ENCODE measurements at regions of chr5 and their contacts with region 1.

Region 1: DNA sequence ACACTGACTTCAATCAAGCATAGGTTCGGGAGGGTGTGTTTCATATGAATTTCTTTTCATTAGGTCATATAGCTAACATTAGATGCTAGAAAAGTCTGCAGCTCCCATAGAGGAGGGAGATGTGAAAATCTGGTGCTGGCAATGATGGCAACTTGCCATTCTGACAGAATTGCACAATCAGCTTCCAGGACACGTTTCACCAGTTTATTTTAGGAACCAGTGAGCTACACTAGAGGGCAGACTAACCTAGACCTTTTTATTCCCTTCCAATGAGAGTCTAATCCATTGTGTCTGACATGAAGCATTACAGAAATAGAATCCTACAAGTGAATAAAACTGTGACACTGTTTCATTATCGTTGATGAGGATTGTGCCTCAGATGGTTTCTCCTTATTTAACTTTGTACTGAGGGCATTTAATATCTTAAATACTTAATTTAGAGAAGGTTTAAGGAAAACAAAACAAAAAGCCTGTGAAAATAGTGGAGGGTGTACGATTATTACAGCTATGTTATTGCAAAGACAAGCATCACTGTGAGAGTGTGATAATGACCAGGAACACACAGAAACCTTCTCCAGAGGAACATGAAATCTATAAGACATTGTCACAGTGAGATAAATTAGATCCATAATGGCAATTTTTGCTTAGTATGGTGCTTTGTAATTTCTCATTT is 363.3 kb upstream of the RPS23 start:
- DNase-seq: peak; percentile 91
- H3K4me3 ChIP-seq: no peak overlapping the region
- H3K27ac ChIP-seq: no peak overlapping the region
- H3K4me1 ChIP-seq: peaks cover 22% of the 10 kb centered on the region
- H3K27me3 ChIP-seq: no peaks in the 10 kb centered on the region
- CTCF ChIP-seq: peak; percentile 77

Region 2: DNA sequence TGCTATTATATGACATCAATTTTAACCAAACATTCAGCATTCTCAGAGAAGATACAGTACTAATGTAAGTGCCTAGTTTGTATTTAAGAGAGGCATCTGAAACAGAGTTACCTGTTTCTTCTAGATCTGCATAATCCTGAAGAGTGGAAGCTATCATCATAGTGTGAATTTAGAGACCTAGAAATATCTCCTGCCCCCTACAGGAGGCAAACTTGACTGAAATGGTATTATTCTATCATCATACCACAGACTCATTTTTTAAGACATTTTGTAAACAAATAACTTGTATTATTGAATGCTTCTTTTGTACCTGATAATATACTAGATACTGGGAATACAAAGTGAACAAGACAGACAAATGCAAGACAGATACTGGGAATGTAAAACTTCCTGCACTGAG is 146.5 kb before region 1 on chr5:
- CTCF ChIA-PET with region 1: no interaction called
- POLR2A ChIA-PET with region 1: no interaction called
- intact Hi-C with region 1: no loop called
- DNase-seq: peak; percentile 4
- H3K4me3 ChIP-seq: no peak overlapping the region
- H3K27ac ChIP-seq: no peak overlapping the region
- H3K4me1 ChIP-seq: no peaks in the 10 kb centered on the region
- H3K27me3 ChIP-seq: no peaks in the 10 kb centered on the region
- CTCF ChIP-seq: peak; percentile 44

Region 3: GRCh38 chr5:82734347-82734746 is 92.9 kb after region 1 on chr5:
- CTCF ChIA-PET with region 1: no interaction called
- POLR2A ChIA-PET with region 1: no interaction called
- intact Hi-C with region 1: no loop called
- DNase-seq: no peak
- H3K4me3 ChIP-seq: no peak overlapping the region
- H3K27ac ChIP-seq: peak overlapping the region; percentile 54
- H3K4me1 ChIP-seq: peaks cover 28% of the 10 kb centered on the region
- H3K27me3 ChIP-seq: no peaks in the 10 kb centered on the region
- CTCF ChIP-seq: no peak

Region 4: DNA sequence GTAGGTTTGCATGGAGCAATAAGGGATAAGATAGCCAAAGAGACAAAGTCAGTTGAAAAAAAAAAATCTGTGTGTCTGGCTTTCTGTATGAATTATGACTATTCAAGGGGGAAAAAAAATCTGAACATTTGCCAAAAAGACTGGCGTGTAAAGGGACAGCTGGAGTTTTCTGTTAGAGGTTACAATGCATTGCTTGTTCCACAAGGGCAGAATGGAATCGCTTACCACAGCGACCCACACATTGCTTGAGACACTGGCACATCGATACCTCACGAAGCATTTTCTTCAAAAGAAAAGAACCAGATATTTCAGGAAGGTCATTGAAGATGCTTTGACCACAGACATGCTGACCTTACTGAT is 108.0 kb after region 1 on chr5:
- CTCF ChIA-PET with region 1: no interaction called
- POLR2A ChIA-PET with region 1: no interaction called
- intact Hi-C with region 1: loop called (anchors 1 kb)
- DNase-seq: peak; percentile 94
- H3K4me3 ChIP-seq: peak overlapping the region; percentile 18
- H3K27ac ChIP-seq: peak overlapping the region; percentile 64
- H3K4me1 ChIP-seq: peaks cover 41% of the 10 kb centered on the region
- H3K27me3 ChIP-seq: peaks cover 20% of the 10 kb centered on the region
- CTCF ChIP-seq: no peak

Region 5: DNA sequence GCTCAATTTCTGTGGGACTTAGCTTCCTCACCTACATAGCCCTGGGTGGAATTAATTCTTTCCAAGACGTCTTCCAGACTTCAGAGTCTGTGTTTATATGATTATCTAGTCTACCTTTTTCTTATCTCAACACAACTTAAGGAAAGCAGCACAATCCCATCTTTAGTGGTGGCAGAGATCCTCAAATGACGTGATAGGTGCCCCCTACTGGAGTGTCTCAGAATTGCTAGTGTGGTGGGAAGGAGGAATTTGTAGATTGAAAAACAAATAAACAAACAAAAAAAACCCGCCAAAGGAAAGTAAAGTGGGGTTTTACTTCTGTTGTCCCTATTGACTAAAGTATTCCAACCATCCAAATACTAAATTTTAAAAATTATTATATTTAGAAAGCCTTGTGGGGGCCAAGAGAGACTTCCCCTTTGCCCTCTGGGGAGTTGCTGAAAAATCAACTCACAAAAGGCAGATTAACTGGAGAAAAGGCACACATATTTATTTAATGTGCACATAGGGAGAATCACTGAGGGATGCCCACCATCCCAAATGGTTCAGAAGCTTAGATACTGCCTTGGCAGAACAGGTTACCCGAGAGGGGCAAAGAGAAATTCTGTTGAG is 152.4 kb after region 1 on chr5:
- CTCF ChIA-PET with region 1: no interaction called
- POLR2A ChIA-PET with region 1: no interaction called
- intact Hi-C with region 1: loop called (anchors 2 kb)
- DNase-seq: peak; percentile 63
- H3K4me3 ChIP-seq: no peak overlapping the region
- H3K27ac ChIP-seq: no peak overlapping the region
- H3K4me1 ChIP-seq: peaks cover 22% of the 10 kb centered on the region
- H3K27me3 ChIP-seq: no peaks in the 10 kb centered on the region
- CTCF ChIP-seq: peak; percentile 90

Region 6: GRCh38 chr5:83076742-83077661 is 435.5 kb after region 1 on chr5 and contains the starts of genes TMEM167A and XRCC4:
- CTCF ChIA-PET with region 1: no interaction called
- POLR2A ChIA-PET with region 1: no interaction called
- intact Hi-C with region 1: loop called (anchors 10 kb)
- DNase-seq: peak; percentile 99
- H3K4me3 ChIP-seq: peak within 1 kb of the TSS; percentile 84
- H3K27ac ChIP-seq: peak within 1 kb of the TSS; percentile 82
- H3K4me1 ChIP-seq: peaks cover 11% of the 10 kb centered on the region
- H3K27me3 ChIP-seq: no peaks in the 10 kb centered on the region
- CTCF ChIP-seq: no peak
- total RNA-seq, gene TMEM167A: 90.5 and 93.8 TPM in 2 replicates
- total RNA-seq, gene XRCC4: 8.1 and 10.1 TPM in 2 replicates

Region 7: GRCh38 chr5:83430130-83431010 is 788.9 kb after region 1 on chr5:
- CTCF ChIA-PET with region 1: no interaction called
- POLR2A ChIA-PET with region 1: no interaction called
- intact Hi-C with region 1: loop called (anchors 1 kb)
- DNase-seq: peak; percentile 69
- H3K4me3 ChIP-seq: no peak overlapping the region
- H3K27ac ChIP-seq: no peak overlapping the region
- H3K4me1 ChIP-seq: no peaks in the 10 kb centered on the region
- H3K27me3 ChIP-seq: no peaks in the 10 kb centered on the region
- CTCF ChIP-seq: peak; percentile 95

Region 8: GRCh38 chr5:83473346-83474163 is 832.1 kb after region 1 on chr5:
- CTCF ChIA-PET with region 1: interaction called, 3 read pairs
- POLR2A ChIA-PET with region 1: no interaction called
- intact Hi-C with region 1: loop called (anchors 5 kb)
- DNase-seq: peak; percentile 93
- H3K4me3 ChIP-seq: peak overlapping the region; percentile 45
- H3K27ac ChIP-seq: no peak overlapping the region
- H3K4me1 ChIP-seq: peaks cover 44% of the 10 kb centered on the region
- H3K27me3 ChIP-seq: peaks cover 48% of the 10 kb centered on the region
- CTCF ChIP-seq: peak; percentile 91

Region 9: GRCh38 chr5:83564069-83564749 is 922.7 kb after region 1 on chr5:
- CTCF ChIA-PET with region 1: no interaction called
- POLR2A ChIA-PET with region 1: no interaction called
- intact Hi-C with region 1: loop called (anchors 5 kb)
- DNase-seq: peak; percentile 52
- H3K4me3 ChIP-seq: no peak overlapping the region
- H3K27ac ChIP-seq: no peak overlapping the region
- H3K4me1 ChIP-seq: no peaks in the 10 kb centered on the region
- H3K27me3 ChIP-seq: peaks cover 4% of the 10 kb centered on the region
- CTCF ChIP-seq: peak; percentile 68